Right ventricle myocardium superior (tissue), 1 donor: ENCODE measurements at regions of chr11 and their contacts with region 1.

Region 1: GRCh38 chr11:447923-448731 is 2.0 kb upstream of the PTDSS2 start:
- DNase-seq: peak; percentile 98
- ATAC-seq: peak; percentile 88

Region 2: GRCh38 chr11:279966-280582 is 168.1 kb before region 1 on chr11:
- intact Hi-C with region 1: no loop called
- DNase-seq: peak; percentile 62
- ATAC-seq: peak; percentile 40

Region 3: DNA sequence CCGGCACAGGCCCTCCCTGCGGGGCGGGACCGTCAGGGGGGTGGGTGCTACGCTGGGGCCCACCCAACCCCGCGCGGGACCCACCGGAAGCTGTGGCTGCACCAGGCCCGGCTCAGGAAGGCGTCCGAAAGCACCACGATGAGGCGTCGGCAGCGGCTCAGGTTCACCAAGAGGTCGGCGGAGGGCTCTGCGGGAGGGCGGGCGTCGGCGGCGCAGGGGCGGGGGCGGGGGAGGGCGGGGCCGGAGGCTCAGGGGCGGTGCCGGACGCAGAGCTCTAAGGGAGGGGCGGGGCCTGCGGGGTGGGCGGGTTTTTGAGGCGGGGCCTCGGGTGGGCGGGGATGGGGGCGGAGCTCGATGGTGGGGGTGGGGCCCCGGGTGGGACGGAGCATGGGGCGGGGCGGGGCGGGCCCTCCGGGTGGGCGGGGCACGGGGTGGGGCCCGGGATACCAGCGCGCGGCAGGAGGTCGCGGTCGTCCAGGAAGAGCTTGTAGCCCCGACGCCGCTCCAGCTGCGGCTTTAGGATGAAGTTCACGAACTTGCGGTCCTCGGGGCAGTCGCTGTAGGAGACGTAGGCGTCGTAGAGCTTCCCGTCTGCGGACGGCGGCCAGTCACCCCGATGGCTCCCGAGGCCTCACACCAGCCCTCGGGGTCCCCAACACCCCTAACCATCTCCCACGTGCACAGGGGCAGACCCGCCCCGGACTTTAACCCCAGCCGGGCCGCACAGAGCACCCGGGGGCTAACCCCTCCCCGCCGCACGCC is 41.0 kb before region 1 on chr11:
- intact Hi-C with region 1: loop called (anchors 5 kb)
- DNase-seq: peak; percentile 91
- ATAC-seq: peak; percentile 77

Region 4: GRCh38 chr11:503179-503981 is 55.3 kb after region 1 on chr11:
- intact Hi-C with region 1: loop called (anchors 5 kb)
- DNase-seq: peak; percentile 78
- ATAC-seq: no peak